ENCODE measurements at regions of chr6 and their contacts with region 1.

Region 1: GRCh38 chr6:32413427-32414047 is 6.6 kb upstream of the BTNL2 start:
- DNase-seq: peak; percentile 89
- ATAC-seq: peak; percentile 97
- H3K4me3 ChIP-seq: no peak overlapping the region
- H3K27ac ChIP-seq: no peak overlapping the region
- H3K4me1 ChIP-seq: peaks cover 8% of the 10 kb centered on the region
- H3K27me3 ChIP-seq: peaks cover 45% of the 10 kb centered on the region
- CTCF ChIP-seq: peak; percentile 97

Region 2: GRCh38 chr6:32271429-32271828 is 142.1 kb before region 1 on chr6:
- intact Hi-C with region 1: no loop called
- DNase-seq: no peak
- ATAC-seq: no peak
- H3K4me3 ChIP-seq: no peak overlapping the region
- H3K27ac ChIP-seq: no peak overlapping the region
- H3K4me1 ChIP-seq: no peaks in the 10 kb centered on the region
- H3K27me3 ChIP-seq: no peaks in the 10 kb centered on the region
- CTCF ChIP-seq: no peak

Region 3: DNA sequence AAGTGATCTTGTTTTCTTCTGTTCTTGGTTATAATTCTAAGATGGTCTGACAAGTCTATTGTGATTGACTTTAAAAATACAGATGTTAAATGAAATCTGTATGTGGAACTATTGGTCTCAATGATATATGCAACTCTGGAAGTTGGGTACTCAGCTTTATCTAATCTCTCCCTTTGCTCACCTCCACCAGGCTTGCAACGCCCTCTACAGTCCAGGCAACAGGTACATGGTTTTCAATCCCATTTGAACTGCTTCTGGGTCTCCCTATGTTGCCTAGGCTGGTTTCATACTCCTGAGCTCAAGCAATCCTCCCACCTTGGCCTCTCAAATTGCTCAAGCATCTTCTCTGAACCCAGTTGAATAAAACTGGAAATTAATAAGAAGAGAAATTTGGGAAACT is 278.5 kb after region 1 on chr6:
- intact Hi-C with region 1: loop called (anchors 10 kb)
- DNase-seq: no peak
- ATAC-seq: peak; percentile 95
- H3K4me3 ChIP-seq: no peak overlapping the region
- H3K27ac ChIP-seq: no peak overlapping the region
- H3K4me1 ChIP-seq: no peaks in the 10 kb centered on the region
- H3K27me3 ChIP-seq: no peaks in the 10 kb centered on the region
- CTCF ChIP-seq: peak; percentile 53

Region 4: DNA sequence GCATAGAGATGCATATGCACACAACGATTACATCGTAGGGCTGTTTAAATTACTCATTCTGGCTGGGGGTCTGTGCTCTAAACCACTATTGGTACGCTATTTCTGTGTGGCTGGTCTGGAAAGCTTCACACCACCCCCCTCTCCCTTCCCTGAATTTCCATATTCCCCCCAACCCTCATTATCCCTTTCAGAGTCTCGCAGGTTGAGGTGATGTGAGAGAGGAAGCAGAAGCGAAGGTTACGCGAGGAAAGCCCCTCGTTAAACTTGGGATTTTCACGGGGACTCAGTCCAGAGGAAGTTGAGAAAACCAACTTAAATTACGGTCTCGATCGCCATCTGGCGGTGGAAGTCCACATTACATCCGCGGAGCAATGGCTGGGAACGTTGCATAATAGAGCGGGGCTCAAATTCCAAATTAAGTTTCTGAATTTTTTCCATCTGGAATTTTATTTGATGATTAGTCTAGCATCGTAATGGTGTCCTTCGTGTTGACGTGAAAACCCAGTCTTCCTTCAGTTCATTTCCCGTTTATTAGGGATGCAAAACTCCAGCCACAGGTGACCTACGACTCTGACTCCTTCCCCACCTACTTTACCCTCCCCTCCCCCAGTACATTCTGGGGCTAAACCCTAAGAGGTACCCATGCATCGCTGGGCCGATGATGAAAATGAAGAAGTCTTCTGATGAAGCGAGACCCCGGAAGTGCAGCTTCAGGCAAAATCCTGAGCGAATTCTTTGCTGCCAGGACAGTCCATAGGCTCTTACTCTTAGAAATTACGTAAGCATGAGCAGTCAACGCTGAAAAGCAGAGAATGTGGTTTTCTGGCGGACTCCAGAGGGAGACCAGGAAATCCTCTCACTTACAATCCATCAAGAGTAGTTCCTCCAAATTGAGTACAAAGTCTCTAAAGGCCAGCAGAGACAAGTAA is 383.6 kb after region 1 on chr6:
- intact Hi-C with region 1: loop called (anchors 5 kb)
- DNase-seq: peak; percentile 83
- ATAC-seq: peak; percentile 85
- H3K4me3 ChIP-seq: peak overlapping the region; percentile 17
- H3K27ac ChIP-seq: no peak overlapping the region
- H3K4me1 ChIP-seq: no peaks in the 10 kb centered on the region
- H3K27me3 ChIP-seq: peaks cover 11% of the 10 kb centered on the region
- CTCF ChIP-seq: peak; percentile 92

Region 5: GRCh38 chr6:32816746-32817204 is 403.2 kb after region 1 on chr6 and contains the start of gene HLA-DOB:
- intact Hi-C with region 1: no loop called
- DNase-seq: no peak
- ATAC-seq: peak; percentile 81
- H3K4me3 ChIP-seq: no peak within 1 kb of the TSS
- H3K27ac ChIP-seq: no peak within 1 kb of the TSS
- H3K4me1 ChIP-seq: no peaks in the 10 kb centered on the region
- H3K27me3 ChIP-seq: no peaks in the 10 kb centered on the region
- CTCF ChIP-seq: no peak
- total RNA-seq, gene HLA-DOB: 0.64 TPM